ENCODE measurements at regions of chr7 and their contacts with region 1.

Region 1: DNA sequence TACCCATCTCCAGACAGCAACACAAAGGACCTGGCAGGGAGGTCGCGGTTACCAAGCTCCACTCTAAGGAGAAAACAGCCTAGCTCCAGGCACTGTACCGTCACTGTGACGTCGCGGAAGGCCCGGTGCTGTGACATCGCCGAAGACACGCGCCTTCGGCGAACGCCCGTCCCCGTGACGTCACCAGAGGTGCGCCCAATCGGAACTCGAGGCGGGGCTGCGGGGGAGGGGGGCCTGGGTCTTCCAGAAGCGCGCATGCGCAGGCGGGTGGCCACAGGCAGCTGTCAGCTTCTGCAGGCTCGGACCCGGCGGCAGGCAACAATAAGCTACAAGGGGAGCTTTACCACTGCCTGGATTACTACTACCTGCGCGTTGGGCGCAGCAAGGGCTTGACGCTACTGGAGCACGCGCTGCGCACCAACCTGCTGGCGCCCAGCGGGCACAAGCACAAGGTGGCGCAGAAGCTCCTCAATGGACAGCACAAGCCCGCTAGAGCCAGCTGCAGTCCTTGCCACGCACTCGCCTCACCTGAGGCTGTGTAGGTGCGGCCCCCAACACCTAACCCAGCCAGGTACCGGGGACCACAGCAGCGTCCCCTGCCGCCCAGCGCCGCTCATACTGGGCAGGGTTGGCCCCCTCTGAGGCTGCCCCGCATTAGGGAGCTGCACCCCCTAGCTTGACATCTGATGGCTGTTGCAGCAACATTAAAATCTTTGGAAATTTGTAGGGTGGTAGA is 208.4 kb downstream of the TPST1 start:
- DNase-seq: peak; percentile 81 to 85
- H3K4me3 ChIP-seq: peak overlapping the region in 1 of 3 donors; percentile 33
- H3K27ac ChIP-seq: peak overlapping the region in 2 of 3 donors; percentile 14 to 33
- H3K4me1 ChIP-seq: peaks cover 0 to 9% of the 10 kb centered on the region in 2 donors
- H3K27me3 ChIP-seq: no peaks in the 10 kb centered on the region
- CTCF ChIP-seq: peak in 4 of 6 experiments; percentile 34 to 52 (median 50)
- POLR2A ChIP-seq: peak in 1 of 2 donors; percentile 40

Region 2: GRCh38 chr7:66204822-66205740 is 208.5 kb before region 1 on chr7 and contains the start of gene TPST1:
- intact Hi-C with region 1: loop called (anchors 10 kb)
- DNase-seq: peak; percentile 91 to 93
- H3K4me3 ChIP-seq: peak within 1 kb of the TSS; percentile 64 to 93 (median 83)
- H3K27ac ChIP-seq: peak within 1 kb of the TSS; percentile 70 to 80 (median 77)
- H3K4me1 ChIP-seq: peaks cover 14 to 16% of the 10 kb centered on the region in 2 donors
- H3K27me3 ChIP-seq: no peaks in the 10 kb centered on the region
- CTCF ChIP-seq: peak in 5 of 6 experiments; percentile 34 to 82 (median 69)
- POLR2A ChIP-seq: peak; percentile 24 to 92
- total RNA-seq, gene TPST1: 24.5 to 60.4 (median 28.2) TPM

Measured in thyroid gland (tissue), 4 donors.